Psoas muscle (tissue), 8 donors: ENCODE measurements at regions of chr19 and their contacts with region 1.

Region 1: DNA sequence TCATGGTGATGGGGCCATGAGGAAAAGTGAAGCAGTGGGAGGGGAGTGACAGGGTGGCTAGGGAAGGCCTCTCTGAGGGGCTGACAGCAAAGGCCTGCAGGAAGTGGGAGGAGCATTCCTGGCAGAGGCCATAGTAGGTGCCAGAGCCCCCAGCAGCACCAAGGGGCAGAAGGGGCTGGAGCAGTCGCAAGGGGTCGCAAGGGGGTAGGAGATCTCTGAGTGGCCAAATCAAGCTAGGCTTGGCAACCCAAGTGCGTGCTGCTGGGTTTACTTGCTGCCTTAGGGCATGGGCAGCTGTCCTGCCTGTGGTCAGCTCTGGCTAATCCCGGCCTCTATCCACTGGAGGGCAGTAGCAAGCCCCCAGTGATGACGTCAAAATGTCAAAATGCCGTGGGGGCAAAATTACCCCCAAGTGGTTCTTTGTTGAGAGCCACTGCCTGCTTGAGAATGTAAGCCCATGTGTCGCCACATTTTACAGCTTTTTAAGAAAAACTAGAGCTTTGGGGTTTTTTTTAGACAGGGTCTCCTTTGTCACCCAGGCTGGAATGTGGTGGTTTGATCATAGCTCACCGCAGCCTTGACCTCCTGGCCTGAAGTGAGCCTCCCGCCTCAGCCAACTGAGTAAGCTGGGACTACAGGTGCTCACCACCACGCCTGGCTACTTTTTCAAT is 11.8 kb downstream of the CCDC97 start:
- DNase-seq: peak; percentile 63 to 73
- ATAC-seq: peak; percentile 47 to 57 (median 51)
- H3K4me3 ChIP-seq: no peak overlapping the region
- H3K27ac ChIP-seq: peak overlapping the region; percentile 72
- H3K4me1 ChIP-seq: peaks cover 40% of the 10 kb centered on the region
- H3K27me3 ChIP-seq: no peaks in the 10 kb centered on the region
- CTCF ChIP-seq: peak; percentile 69

Region 2: GRCh38 chr19:41031649-41032328 is 289.9 kb before region 1 on chr19:
- intact Hi-C with region 1: no loop called
- DNase-seq: no peak
- ATAC-seq: no peak
- H3K4me3 ChIP-seq: no peak overlapping the region
- H3K27ac ChIP-seq: no peak overlapping the region
- H3K4me1 ChIP-seq: no peaks in the 10 kb centered on the region
- H3K27me3 ChIP-seq: peaks cover 0 to 10% (median 0%) of the 10 kb centered on the region in 3 donors
- CTCF ChIP-seq: no peak

Region 3: DNA sequence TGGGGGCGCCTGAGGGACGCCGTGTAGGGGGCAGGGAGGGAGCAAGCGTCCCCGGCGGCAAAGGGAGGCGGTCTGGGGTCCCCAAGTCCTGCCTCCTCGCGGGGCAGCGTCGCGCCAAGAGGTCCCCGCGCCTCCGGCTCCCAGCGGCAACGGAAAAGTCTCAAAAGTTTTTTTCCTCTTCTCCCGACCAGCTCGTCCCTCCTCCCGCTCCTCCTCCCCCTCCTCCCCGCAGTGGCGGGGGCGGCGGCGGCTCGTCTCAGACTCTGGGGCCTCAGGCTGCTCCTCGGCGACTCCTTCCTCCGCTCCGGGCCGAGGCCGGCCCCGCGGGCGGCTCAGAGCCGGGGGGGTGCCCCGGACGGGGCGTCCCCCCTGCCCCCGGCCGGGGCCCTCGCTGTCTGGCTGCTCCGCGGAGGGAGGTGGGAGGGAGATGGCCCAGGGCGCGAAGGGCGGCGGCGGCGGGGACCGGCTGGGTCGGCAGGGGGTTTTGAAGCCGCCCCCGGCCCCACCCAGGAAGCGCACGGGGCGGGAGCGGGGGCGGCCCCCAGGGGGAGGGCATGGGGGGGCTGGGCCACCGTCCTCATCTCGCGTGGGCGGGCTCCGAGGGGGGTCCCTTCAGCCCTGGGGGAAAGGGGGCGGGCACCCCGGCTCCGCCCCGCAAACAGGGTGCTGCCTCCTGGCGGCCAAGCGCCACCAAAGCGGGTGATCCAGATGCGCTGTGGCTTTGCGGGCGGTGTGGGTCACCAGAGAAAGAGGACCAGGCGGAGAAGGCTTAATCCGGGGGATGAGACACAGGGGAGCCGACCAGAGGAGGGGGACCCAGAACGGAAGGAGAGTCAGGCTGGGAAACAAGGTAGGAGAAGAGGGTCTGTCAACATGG is 32.0 kb after region 1 on chr19 and contains the start of gene TGFB1:
- intact Hi-C with region 1: loop called in 1 of 2 experiments (anchors 5 kb)
- DNase-seq: peak; percentile 90 to 91
- ATAC-seq: peak; percentile 67 to 77 (median 70)
- H3K4me3 ChIP-seq: peak within 1 kb of the TSS; percentile 69
- H3K27ac ChIP-seq: peak within 1 kb of the TSS; percentile 59
- H3K4me1 ChIP-seq: peaks cover 3% of the 10 kb centered on the region
- H3K27me3 ChIP-seq: peaks cover 0 to 38% (median 0%) of the 10 kb centered on the region in 3 donors
- CTCF ChIP-seq: peak; percentile 75
- total RNA-seq, gene TGFB1: 8.2 to 10.8 (median 10.1) TPM

Region 4: GRCh38 chr19:41426952-41427646 is 105.4 kb after region 1 on chr19 and contains the start of gene B3GNT8:
- intact Hi-C with region 1: loop called in 1 of 2 experiments (anchors 5 kb)
- DNase-seq: peak; percentile 86 to 87
- ATAC-seq: peak; percentile 19 to 59 (median 42)
- H3K4me3 ChIP-seq: peak within 1 kb of the TSS; percentile 64
- H3K27ac ChIP-seq: peak within 1 kb of the TSS; percentile 72
- H3K4me1 ChIP-seq: peaks cover 16% of the 10 kb centered on the region
- H3K27me3 ChIP-seq: no peaks in the 10 kb centered on the region
- CTCF ChIP-seq: no peak
- total RNA-seq, gene B3GNT8: 0.55 to 1.9 (median 1.3) TPM